PC-3 (cell line): ENCODE measurements at regions of chr6 and their contacts with region 1.

Region 1: DNA sequence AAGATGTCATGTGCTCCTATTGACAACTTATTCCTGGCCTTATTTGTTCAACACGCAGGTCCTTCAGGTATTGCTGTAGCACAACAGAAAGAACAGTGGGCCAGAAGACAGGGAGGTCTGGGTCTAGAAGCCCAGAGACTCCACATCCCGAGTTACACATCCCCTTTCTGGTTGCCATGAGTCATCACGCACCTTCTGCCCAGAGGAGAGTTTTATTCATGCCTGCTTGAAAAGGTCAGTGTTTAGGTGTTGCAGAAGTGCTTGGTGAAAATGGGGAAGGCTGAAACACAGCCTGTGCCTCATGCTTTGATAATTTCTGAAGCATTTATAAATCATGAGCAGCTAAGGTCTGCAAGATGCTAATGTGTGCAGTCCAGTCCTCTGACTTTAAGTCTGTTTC is 256.4 kb downstream of the GMPR start:
- DNase-seq: peak; percentile 53
- ATAC-seq: no peak
- H3K4me3 ChIP-seq: no peak overlapping the region
- H3K27ac ChIP-seq: no peak overlapping the region
- H3K4me1 ChIP-seq: peaks cover 23% of the 10 kb centered on the region
- H3K27me3 ChIP-seq: no peaks in the 10 kb centered on the region
- CTCF ChIP-seq: no peak

Region 2: GRCh38 chr6:15977050-15977449 is 517.7 kb before region 1 on chr6:
- CTCF ChIA-PET with region 1: no interaction called
- POLR2A ChIA-PET with region 1: no interaction called
- intact Hi-C with region 1: no loop called
- DNase-seq: no peak
- ATAC-seq: no peak
- H3K4me3 ChIP-seq: no peak overlapping the region
- H3K27ac ChIP-seq: no peak overlapping the region
- H3K4me1 ChIP-seq: no peaks in the 10 kb centered on the region
- H3K27me3 ChIP-seq: peaks cover 16% of the 10 kb centered on the region; the same call in 1 of the 2 replicates
- CTCF ChIP-seq: no peak

Region 3: GRCh38 chr6:16409531-16410441 is 85.0 kb before region 1 on chr6:
- CTCF ChIA-PET with region 1: no interaction called
- POLR2A ChIA-PET with region 1: no interaction called
- intact Hi-C with region 1: loop called (anchors 5 kb)
- DNase-seq: peak; percentile 83
- ATAC-seq: peak; percentile 97
- H3K4me3 ChIP-seq: peak overlapping the region; percentile 54
- H3K27ac ChIP-seq: peak overlapping the region; percentile 10; the same call in 1 of the 2 replicates
- H3K4me1 ChIP-seq: peaks cover 15% of the 10 kb centered on the region
- H3K27me3 ChIP-seq: no peaks in the 10 kb centered on the region
- CTCF ChIP-seq: peak; percentile 94